Right ventricle myocardium inferior (tissue), 1 donor: ENCODE measurements at regions of chr1 and their contacts with region 1.

Region 1: GRCh38 chr1:182962554-182963115 is 9.7 kb upstream of the SHCBP1L start:
- DNase-seq: peak; percentile 85
- ATAC-seq: peak; percentile 100

Region 2: DNA sequence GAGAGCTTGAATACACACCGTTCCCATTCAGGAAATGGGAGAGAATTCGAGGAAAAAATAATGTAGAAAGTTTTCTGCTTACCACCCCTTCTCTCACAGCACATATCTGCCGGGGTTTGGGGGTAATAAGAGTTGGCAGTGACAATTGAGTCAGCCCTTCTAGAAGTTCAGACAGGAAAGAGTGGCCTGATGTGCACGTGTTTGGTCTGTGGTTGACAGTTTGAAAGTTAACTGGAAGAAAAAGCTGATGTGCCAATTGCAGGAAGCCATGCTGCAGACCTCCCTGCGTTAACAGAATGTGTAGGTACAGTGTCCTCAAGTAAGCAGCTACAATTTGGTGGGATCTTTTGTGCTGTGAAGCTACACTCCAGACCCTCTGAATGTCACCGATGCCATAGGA is 72.6 kb before region 1 on chr1:
- intact Hi-C with region 1: no loop called
- DNase-seq: no peak
- ATAC-seq: no peak

Region 3: DNA sequence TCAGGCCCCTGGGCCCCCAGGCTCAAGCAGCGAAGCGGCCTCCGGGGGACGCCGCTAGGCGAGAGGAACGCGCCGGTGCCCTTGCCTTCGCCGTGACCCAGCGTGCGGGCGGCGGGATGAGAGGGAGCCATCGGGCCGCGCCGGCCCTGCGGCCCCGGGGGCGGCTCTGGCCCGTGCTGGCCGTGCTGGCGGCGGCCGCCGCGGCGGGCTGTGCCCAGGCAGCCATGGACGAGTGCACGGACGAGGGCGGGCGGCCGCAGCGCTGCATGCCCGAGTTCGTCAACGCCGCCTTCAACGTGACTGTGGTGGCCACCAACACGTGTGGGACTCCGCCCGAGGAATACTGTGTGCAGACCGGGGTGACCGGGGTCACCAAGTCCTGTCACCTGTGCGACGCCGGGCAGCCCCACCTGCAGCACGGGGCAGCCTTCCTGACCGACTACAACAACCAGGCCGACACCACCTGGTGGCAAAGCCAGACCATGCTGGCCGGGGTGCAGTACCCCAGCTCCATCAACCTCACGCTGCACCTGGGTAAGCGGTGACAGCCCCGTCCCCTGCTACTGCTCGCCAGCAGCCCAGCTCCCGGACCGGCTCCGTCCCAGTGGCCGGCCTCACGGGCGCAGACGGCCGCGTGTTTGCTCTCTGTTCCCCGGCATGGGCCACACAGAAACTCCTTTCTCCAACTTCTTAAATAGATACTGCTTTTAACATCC is 61.1 kb after region 1 on chr1:
- intact Hi-C with region 1: loop called (anchors 2 kb)
- DNase-seq: peak; percentile 80
- ATAC-seq: peak; percentile 29

Region 4: GRCh38 chr1:183105449-183105848 is 142.8 kb after region 1 on chr1:
- intact Hi-C with region 1: loop called (anchors 5 kb)
- DNase-seq: no peak
- ATAC-seq: no peak

Region 5: GRCh38 chr1:183139281-183139942 is 176.8 kb after region 1 on chr1:
- intact Hi-C with region 1: loop called (anchors 5 kb)
- DNase-seq: no peak
- ATAC-seq: no peak

Region 6: DNA sequence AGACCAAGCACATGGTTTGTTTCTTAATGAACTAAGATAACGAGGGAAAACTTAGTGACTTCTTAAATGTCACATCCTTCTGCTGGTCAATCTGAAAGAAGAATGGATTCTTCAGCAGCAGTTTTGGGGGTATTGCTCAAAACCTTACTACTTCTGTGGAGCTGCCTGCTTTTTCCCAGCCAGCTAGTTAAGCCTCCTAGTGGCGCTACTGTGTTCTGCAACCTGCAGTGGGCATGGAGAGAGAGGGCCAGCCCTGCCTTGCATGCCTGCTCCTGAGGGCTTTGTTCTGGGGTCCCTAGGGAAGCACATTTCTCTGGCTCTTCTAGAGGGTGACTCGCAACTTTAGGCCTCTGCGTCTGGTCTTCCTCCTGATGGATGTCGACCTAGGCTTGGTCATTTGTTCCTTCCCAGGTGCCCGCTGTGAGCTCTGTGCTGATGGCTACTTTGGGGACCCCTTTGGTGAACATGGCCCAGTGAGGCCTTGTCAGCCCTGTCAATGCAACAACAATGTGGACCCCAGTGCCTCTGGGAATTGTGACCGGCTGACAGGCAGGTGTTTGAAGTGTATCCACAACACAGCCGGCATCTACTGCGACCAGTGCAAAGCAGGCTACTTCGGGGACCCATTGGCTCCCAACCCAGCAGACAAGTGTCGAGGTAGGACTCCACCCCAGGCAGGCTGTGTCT is 265.5 kb after region 1 on chr1:
- intact Hi-C with region 1: loop called (anchors 2 kb)
- DNase-seq: no peak
- ATAC-seq: peak; percentile 64

Region 7: DNA sequence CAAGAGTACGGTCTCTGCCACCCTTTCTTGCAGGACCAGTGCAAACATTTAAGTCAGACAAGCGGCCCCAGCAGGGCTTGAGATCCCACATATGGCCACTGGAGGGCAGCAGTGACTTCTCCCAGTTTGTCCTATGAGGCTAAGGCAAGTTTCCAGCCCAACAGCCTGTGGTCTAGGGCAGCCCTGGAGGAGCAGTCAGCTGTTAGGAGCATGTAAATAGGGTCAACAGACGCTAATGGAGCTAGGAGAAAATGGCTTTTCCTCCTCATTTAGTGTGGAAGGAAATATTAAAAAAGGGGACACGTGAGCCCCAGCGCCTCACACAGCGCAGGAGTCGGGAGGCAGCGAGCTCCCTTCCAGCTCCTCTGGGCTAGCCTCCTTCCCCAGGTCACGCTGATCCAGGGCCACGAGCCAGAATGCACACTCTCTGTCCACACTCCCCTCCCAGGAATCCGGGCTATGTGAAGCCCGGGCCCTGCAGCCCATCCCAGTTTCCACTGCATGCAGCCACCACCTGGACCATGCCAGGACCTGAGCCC is 319.0 kb after region 1 on chr1:
- intact Hi-C with region 1: loop called (anchors 2 kb)
- DNase-seq: peak; percentile 93
- ATAC-seq: peak; percentile 89

Region 8: GRCh38 chr1:183318433-183318832 is 355.8 kb after region 1 on chr1:
- intact Hi-C with region 1: loop called (anchors 2 kb)
- DNase-seq: peak; percentile 88
- ATAC-seq: peak; percentile 97